Psoas muscle (tissue), 8 donors: ENCODE measurements at regions of chr11 and their contacts with region 1.

Region 1: GRCh38 chr11:66100272-66101065 is 30.4 kb downstream of the PACS1 start:
- DNase-seq: peak; percentile 56 to 64
- ATAC-seq: peak; percentile 55 to 70 (median 66)
- H3K4me3 ChIP-seq: no peak overlapping the region
- H3K27ac ChIP-seq: no peak overlapping the region
- H3K4me1 ChIP-seq: no peaks in the 10 kb centered on the region
- H3K27me3 ChIP-seq: no peaks in the 10 kb centered on the region
- CTCF ChIP-seq: no peak

Region 2: GRCh38 chr11:66192181-66192863 is 91.9 kb after region 1 on chr11:
- intact Hi-C with region 1: loop called in 1 of 2 experiments (anchors 10 kb)
- DNase-seq: no peak
- ATAC-seq: no peak
- H3K4me3 ChIP-seq: no peak overlapping the region
- H3K27ac ChIP-seq: no peak overlapping the region
- H3K4me1 ChIP-seq: no peaks in the 10 kb centered on the region
- H3K27me3 ChIP-seq: no peaks in the 10 kb centered on the region
- CTCF ChIP-seq: no peak